ENCODE measurements at regions of chr14 and their contacts with region 1.

Region 1: DNA sequence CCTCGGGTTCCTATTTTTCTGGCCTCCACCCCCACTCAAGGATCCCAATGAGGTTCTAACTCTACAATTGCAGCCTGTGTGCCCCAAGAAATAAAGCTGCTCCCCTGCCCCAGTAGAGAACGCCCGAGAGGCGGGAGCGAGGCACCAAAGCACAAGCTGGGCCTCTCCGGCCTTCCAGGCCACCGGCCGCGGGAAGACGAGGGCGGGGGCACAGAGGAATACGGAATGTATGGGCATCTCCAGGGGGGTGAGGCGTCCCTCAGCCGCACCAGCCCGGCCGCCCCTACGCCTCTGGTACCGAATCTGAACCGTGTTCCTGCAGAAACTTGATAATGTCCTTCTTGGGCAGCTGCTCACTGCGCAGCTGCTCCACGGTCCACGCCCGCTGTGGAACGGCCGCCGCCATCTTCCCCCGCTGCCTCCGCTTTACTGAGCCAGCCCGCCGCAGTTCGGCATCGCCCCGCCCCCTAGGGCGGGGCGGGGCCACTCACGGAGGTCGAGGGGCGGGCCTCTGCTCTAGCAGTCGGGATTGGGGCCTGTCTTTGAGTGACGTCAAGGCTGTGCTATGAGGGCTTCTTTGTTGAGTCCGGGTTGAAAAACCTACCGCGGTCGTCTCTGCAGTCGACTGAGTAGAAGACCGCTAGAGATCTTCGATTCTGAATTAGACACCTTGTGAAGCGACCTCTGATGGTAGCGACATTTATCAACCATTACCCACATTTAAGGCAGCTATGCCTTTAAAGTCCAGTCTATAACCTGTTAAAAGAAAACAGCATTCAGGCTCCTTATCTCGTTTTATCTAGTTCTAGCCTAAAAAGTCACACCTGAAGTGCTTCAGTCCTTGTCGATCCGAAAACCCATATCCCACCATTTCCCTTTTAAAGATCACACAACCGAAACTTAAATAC is at the start of gene FKBP3:
- DNase-seq: peak; percentile 93 to 98 (median 93)
- H3K4me3 ChIP-seq: peak within 1 kb of the TSS; percentile 98
- H3K4me3 Mint-ChIP-seq: peak within 1 kb of the TSS; percentile 92 to 99 (median 96)
- H3K27ac ChIP-seq: peak within 1 kb of the TSS; percentile 86
- H3K27ac Mint-ChIP-seq: peak within 1 kb of the TSS; percentile 93 to 98 (median 96)
- H3K4me1 ChIP-seq: peaks cover 31% of the 10 kb centered on the region
- H3K4me1 Mint-ChIP-seq: peaks cover 41 to 72% (median 71%) of the 10 kb centered on the region in 3 donors
- H3K27me3 ChIP-seq: no peaks in the 10 kb centered on the region
- H3K27me3 Mint-ChIP-seq: no peaks in the 10 kb centered on the region
- total RNA-seq, gene FKBP3: 66.4 to 69.0 TPM

Region 2: DNA sequence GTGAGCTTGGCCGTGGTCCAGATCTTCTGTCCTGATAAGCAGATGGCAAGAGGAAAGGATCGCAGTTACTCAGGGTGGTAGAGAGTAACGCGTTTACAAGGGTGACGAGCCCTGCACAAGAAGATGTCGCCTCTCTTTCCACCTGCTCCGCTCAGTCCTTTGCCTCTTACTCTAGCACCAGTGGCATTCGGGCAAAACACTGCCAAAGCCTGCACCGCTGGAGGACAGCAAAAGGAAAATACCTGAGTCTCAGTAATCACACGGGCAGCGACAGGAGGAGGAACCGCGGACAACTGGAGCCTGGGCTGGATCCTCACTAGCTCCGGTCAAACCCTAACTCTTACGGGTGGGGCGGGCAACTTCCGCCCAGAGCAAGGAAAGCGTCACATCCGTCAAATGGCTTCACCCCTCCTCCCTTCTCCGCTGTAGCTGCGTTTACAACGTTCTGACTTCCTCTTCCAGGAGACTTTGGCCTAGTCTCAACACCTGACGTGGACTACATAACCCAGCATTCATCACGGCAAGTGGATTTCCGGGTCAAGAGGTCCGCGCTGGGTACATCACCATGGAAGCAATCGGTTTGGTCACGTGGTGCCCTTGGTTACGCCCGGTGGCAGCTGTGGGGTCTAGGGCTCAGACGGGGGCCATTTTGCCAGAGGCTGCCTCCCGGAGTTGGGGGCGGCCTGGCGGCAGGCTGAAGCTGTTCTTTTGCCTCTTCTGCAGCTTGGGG is 172.5 kb before region 1 on chr14 and contains the starts of genes KLHL28 and TOGARAM1:
- CTCF ChIA-PET with region 1: interaction called, 15 read pairs
- POLR2A ChIA-PET with region 1: interaction called, 25 read pairs
- DNase-seq: peak; percentile 91 to 99 (median 97)
- H3K4me3 ChIP-seq: peak within 1 kb of the TSS; percentile 90
- H3K4me3 Mint-ChIP-seq: no peak within 1 kb of the TSS
- H3K27ac ChIP-seq: peak within 1 kb of the TSS; percentile 97
- H3K27ac Mint-ChIP-seq: peak within 1 kb of the TSS in 1 of 8 donors; percentile 32
- H3K4me1 ChIP-seq: peaks cover 64% of the 10 kb centered on the region
- H3K4me1 Mint-ChIP-seq: peaks cover 5 to 72% (median 60%) of the 10 kb centered on the region in 3 donors
- H3K27me3 ChIP-seq: no peaks in the 10 kb centered on the region
- H3K27me3 Mint-ChIP-seq: no peaks in the 10 kb centered on the region
- total RNA-seq, gene KLHL28: 12.3 to 13.4 TPM
- total RNA-seq, gene TOGARAM1: 7.2 to 7.5 TPM

Region 3: GRCh38 chr14:45083971-45084722 is 50.2 kb before region 1 on chr14 and contains the start of gene PRPF39:
- CTCF ChIA-PET with region 1: no interaction called
- POLR2A ChIA-PET with region 1: interaction called, 12 read pairs
- DNase-seq: peak; percentile 92 to 96 (median 96)
- H3K4me3 ChIP-seq: peak within 1 kb of the TSS; percentile 90
- H3K4me3 Mint-ChIP-seq: peak within 1 kb of the TSS; percentile 92 to 97 (median 96)
- H3K27ac ChIP-seq: peak within 1 kb of the TSS; percentile 89
- H3K27ac Mint-ChIP-seq: peak within 1 kb of the TSS; percentile 90 to 99 (median 95)
- H3K4me1 ChIP-seq: peaks cover 40% of the 10 kb centered on the region
- H3K4me1 Mint-ChIP-seq: peaks cover 45 to 53% (median 53%) of the 10 kb centered on the region in 3 donors
- H3K27me3 ChIP-seq: no peaks in the 10 kb centered on the region
- H3K27me3 Mint-ChIP-seq: peaks cover 0 to 5% of the 10 kb centered on the region in 2 donors
- total RNA-seq, gene PRPF39: 48.6 to 49.1 TPM